Activated T-helper 1 cell treated with anti-CD3 and anti-CD28 coated beads, Interleukin-12 subunit alpha, Interleukin-12 subunit beta, Interleukin-2, Interleukin-4 antibody, amounts not matched to agents 30 ng/mL and 10 ng/mL and 1 ng/mL, durations not matched to agents 14 hours and 24 hours and 36 hours (primary cell): ENCODE measurements at regions of chr1 and their contacts with region 1.

Region 1: DNA sequence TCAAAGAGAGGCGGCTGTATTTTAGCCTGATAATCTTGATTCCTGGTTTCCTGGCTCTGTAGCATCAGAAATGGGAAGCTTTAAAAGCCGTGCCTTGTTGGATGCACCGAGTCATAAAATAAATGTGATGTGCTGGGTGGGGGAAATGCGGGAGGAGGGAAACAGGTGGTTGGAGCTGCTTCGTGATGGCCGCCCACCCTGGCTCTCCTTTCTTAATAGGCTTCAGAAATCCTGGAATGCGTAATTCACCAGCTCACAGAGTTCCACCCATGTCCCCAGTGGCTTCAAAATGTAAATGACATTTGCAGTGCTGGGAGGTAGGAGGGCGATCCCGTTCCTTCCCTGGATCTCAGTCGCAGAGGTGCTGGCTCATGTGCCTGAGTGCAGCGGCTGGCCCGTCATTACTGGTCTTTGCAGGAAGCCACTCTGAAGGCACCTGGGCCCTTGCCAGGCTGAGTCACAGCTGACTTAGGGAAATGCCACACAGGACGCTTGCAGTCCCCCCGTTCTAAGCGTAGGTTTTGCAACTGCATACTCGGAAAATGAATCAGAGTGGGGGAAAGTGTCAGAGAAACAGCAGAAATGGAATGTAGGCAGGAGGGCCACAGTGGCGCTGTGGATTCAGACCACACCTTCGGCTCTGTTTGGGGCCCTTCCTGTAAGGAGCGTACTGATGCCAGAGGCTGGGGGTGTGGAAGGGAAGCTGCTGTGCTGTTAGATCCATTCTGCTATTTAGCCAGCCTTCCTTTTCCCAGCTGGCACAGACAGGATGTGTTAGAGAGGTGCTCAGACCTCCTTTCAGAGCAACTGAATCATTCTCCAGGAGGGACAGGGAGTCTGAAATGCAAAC is 37.6 kb downstream of the GALNT2 start:
- DNase-seq: peak; percentile 63
- H3K4me3 Mint-ChIP-seq: peak overlapping the region; percentile 66
- H3K27ac Mint-ChIP-seq: peak overlapping the region; percentile 91
- H3K4me1 Mint-ChIP-seq: peaks cover 85% of the 10 kb centered on the region
- H3K27me3 Mint-ChIP-seq: peaks cover 1% of the 10 kb centered on the region

Region 2: DNA sequence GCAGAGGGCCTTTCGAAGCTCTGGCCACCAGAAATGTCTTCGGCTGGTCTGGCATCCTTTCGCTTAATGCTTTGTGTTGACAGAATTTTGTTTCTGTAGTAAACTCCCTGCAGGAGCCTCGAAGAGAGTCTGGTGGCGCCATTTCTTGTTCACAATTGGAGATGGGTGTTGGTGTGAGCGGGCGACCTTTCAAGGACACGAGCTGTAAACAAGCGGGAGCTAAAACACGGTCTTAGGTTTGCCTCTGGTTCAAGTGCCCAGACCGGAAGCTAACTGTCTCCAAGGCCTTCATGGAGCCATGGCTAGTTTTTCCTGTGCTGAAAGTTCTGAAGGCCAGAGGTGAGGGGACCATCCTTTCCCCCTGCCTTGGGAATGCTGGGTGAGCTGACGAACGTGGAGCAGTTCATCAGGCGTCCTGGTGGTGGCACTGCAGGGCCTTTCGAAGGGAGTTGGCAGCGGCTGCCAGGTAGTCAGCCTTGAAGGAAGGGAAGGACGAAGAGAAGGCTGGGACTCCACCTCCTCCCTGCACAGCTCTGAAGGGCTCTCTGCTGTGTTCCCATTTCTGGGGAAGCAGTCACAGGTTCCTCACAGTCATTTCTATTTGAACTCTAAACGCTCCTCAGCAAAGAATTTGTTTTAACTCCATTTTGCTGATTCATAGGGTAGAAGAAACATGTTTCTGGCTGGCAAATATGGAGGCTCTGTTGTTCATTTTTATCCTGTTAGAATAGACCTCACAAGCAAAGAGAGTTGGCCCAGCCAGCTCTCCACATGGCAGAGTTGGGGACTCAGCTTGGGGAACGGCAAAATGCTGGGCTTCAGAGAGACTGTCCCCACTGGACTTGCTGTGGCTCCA is 443.4 kb before region 1 on chr1:
- intact Hi-C with region 1: loop called (anchors 1 kb)
- DNase-seq: peak; percentile 49
- H3K4me3 Mint-ChIP-seq: no peak overlapping the region
- H3K27ac Mint-ChIP-seq: no peak overlapping the region
- H3K4me1 Mint-ChIP-seq: peaks cover 21% of the 10 kb centered on the region
- H3K27me3 Mint-ChIP-seq: no peaks in the 10 kb centered on the region

Region 3: GRCh38 chr1:229993060-229993459 is 111.6 kb before region 1 on chr1:
- intact Hi-C with region 1: no loop called
- DNase-seq: no peak
- H3K4me3 Mint-ChIP-seq: no peak overlapping the region
- H3K27ac Mint-ChIP-seq: no peak overlapping the region
- H3K4me1 Mint-ChIP-seq: no peaks in the 10 kb centered on the region
- H3K27me3 Mint-ChIP-seq: peaks cover 5% of the 10 kb centered on the region

Region 4: GRCh38 chr1:230066466-230067404 is 37.9 kb before region 1 on chr1 and contains the start of gene GALNT2:
- intact Hi-C with region 1: loop called (anchors 1 kb)
- DNase-seq: peak; percentile 88
- H3K4me3 Mint-ChIP-seq: peak within 1 kb of the TSS; percentile 93
- H3K27ac Mint-ChIP-seq: peak within 1 kb of the TSS; percentile 89
- H3K4me1 Mint-ChIP-seq: peaks cover 48% of the 10 kb centered on the region
- H3K27me3 Mint-ChIP-seq: peaks cover 3% of the 10 kb centered on the region
- total RNA-seq, gene GALNT2: 67.6 and 67.9 TPM in 2 replicates

Region 5: GRCh38 chr1:230167419-230167852 is 62.8 kb after region 1 on chr1:
- intact Hi-C with region 1: loop called (anchors 1 kb)
- DNase-seq: peak; percentile 12
- H3K4me3 Mint-ChIP-seq: no peak overlapping the region
- H3K27ac Mint-ChIP-seq: no peak overlapping the region
- H3K4me1 Mint-ChIP-seq: peaks cover 39% of the 10 kb centered on the region
- H3K27me3 Mint-ChIP-seq: no peaks in the 10 kb centered on the region

Region 6: DNA sequence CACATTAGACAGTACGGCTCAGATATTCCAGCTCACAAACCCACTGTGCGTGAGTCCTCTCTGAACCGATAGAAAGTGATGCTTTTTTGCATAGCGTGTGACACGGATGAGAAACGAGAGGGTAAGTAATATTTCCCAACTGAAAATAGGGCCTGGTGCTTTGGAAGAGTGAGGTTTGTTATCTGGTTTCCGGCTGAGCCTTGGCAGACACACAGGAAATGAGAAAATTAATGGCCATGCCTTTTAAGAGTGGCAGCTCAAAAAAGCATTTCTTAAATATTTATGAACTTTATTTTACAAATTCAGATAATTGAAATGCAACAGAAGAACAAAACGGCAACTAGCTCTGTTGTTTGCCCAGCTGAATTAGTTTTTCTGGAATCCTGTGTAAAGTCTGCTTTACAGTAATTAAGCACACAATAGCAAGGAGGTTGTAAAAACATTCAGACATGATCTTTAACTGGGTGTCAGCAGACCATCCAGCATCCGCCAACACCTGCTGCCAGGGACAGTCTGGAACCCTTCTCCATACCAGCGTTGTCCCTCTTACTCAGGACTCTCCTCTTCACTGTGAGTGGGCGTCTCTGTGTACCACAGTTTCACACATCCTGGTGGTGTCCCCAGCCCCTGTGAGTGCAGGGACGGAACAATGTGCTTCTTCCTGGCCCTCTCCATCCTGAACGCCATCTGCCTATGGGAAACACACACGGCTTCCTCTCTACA is 166.1 kb after region 1 on chr1:
- intact Hi-C with region 1: loop called (anchors 1 kb)
- DNase-seq: no peak
- H3K4me3 Mint-ChIP-seq: no peak overlapping the region
- H3K27ac Mint-ChIP-seq: peak overlapping the region; percentile 89
- H3K4me1 Mint-ChIP-seq: peaks cover 28% of the 10 kb centered on the region
- H3K27me3 Mint-ChIP-seq: no peaks in the 10 kb centered on the region

Region 7: GRCh38 chr1:230350208-230350921 is 245.7 kb after region 1 on chr1:
- intact Hi-C with region 1: no loop called
- DNase-seq: no peak
- H3K4me3 Mint-ChIP-seq: no peak overlapping the region
- H3K27ac Mint-ChIP-seq: no peak overlapping the region
- H3K4me1 Mint-ChIP-seq: no peaks in the 10 kb centered on the region
- H3K27me3 Mint-ChIP-seq: peaks cover 2% of the 10 kb centered on the region